Calu3 (cell line): ENCODE measurements at regions of chr3 and their contacts with region 1.

Region 1: GRCh38 chr3:143775459-143775858 is 72.8 kb downstream of the SLC9A9 start:
- DNase-seq: no peak
- H3K4me3 Mint-ChIP-seq: no peak overlapping the region
- H3K27ac Mint-ChIP-seq: no peak overlapping the region
- H3K4me1 Mint-ChIP-seq: no peaks in the 10 kb centered on the region
- H3K27me3 Mint-ChIP-seq: no peaks in the 10 kb centered on the region
- CTCF ChIP-seq: peak; percentile 42

Region 2: GRCh38 chr3:143831208-143831607 is 55.7 kb after region 1 on chr3:
- CTCF ChIA-PET with region 1: no interaction called
- intact Hi-C with region 1: loop called (anchors 5 kb)
- DNase-seq: no peak
- H3K4me3 Mint-ChIP-seq: no peak overlapping the region
- H3K27ac Mint-ChIP-seq: no peak overlapping the region
- H3K4me1 Mint-ChIP-seq: peaks cover 6% of the 10 kb centered on the region
- H3K27me3 Mint-ChIP-seq: no peaks in the 10 kb centered on the region
- CTCF ChIP-seq: no peak

Region 3: DNA sequence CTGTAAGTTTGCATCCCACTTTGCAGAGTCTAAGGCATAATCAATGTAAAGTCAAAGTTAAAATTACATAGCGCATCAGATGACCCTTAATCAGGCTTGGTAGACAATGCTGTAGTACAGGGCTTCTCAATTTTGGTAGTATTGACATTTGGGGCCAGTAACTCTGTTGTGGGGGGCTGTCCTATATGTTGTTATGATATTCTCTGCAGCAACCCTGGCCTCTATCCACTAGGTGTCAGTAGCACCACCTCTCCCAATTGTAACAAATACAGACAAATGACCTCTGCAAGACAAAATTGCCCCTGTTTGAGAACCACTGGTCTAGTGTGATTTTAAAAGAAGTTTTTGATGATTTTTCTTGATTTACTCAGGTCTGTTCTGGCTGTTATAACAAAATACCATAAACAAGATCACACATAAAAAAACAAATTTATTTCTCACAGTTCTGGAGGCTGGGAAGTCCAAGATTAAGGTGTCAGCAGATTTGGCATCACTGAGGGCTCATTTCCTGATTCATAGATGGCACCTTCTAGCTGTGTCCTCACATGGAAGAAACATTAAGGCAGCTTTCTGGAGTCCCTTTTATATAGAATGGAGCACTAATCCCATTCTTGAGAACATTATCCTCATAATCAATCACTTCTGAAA is 110.4 kb after region 1 on chr3:
- CTCF ChIA-PET with region 1: no interaction called
- intact Hi-C with region 1: loop called (anchors 10 kb)
- DNase-seq: peak; percentile 53
- H3K4me3 Mint-ChIP-seq: no peak overlapping the region
- H3K27ac Mint-ChIP-seq: no peak overlapping the region
- H3K4me1 Mint-ChIP-seq: no peaks in the 10 kb centered on the region
- H3K27me3 Mint-ChIP-seq: no peaks in the 10 kb centered on the region
- CTCF ChIP-seq: peak; percentile 88

Region 4: DNA sequence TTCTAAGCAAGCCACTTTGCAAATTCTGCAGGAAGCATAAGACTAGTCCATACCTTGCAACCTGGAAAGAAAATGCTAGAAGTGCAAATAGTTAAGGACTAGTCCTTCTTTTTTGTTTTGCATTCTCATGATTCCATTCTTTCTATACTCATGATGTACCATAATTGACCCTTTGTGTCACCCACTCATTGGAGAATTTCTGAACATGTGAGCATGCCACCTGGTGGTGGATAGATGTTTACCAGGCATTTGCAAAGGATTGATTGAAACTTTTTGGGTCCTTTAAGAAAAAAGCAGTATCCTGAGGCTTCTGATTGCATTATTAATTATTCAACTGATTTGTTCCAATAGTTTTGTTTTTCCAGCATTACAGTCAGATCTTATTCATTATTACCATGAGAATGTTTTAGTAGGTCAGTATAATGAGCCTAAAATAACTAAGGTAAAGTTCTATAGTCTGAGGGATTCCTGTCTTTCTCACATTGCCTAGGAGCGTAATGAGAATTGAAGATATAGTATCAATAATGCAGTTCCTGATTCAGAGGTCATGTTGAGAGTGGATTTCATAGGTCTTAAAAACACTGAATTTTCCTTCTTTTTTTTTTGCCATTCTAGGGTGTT is 176.0 kb after region 1 on chr3:
- CTCF ChIA-PET with region 1: interaction called, 3 read pairs
- intact Hi-C with region 1: loop called (anchors 1 kb)
- DNase-seq: peak; percentile 55
- H3K4me3 Mint-ChIP-seq: no peak overlapping the region
- H3K27ac Mint-ChIP-seq: no peak overlapping the region
- H3K4me1 Mint-ChIP-seq: no peaks in the 10 kb centered on the region
- H3K27me3 Mint-ChIP-seq: no peaks in the 10 kb centered on the region
- CTCF ChIP-seq: peak; percentile 83

Region 5: DNA sequence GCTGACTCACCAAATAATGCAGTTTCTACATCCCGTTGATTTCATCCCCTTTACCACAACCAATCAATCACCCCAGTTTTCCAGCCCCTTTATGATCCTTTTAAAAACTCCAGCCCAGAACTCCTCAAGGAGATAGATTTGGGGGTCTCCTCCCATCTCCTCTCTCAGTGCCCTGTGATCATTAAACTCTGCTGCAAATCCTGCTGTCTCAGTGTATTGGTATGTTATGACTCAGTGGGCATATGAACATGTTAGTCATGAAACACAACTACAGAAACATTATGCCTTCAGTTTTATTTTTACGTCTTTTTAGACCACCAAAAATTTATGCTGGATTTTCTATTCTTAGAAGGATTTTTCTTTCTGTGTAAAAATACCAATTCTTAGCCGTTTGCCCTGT is 409.8 kb after region 1 on chr3:
- CTCF ChIA-PET with region 1: no interaction called
- intact Hi-C with region 1: no loop called
- DNase-seq: no peak
- H3K4me3 Mint-ChIP-seq: no peak overlapping the region
- H3K27ac Mint-ChIP-seq: no peak overlapping the region
- H3K4me1 Mint-ChIP-seq: no peaks in the 10 kb centered on the region
- H3K27me3 Mint-ChIP-seq: no peaks in the 10 kb centered on the region
- CTCF ChIP-seq: no peak